H1 (cell line): ENCODE measurements at regions of chr2 and their contacts with region 1.

Region 1: DNA sequence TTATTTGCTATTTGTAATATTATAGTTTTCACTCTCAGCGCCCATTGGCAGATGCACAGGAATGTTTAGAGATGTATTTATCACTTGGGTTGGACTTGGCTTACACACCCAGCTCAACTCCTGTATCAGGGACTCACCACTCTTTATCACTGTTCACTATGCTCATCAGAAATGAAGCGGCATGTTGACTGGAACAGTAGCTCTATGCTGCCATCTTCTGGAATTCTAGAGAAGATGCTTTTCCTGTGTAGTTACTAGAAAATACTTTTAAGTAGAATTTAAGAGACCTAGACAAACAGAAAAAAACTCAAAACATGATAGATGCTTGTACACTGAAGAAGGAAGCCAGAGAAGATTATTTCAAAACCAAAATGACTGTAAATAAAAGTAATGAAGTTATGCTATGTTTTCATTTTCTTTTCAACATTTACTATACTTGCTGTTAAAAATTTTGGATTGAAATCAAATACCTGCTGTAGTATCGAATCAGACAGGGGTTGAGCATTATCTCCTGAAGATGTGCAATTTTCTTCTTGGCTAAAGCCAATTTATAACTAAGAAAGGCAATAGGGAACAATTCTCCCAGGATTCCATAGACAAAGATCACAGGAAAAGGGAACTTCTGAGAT is 47.4 kb upstream of the NXPH2 start:
- DNase-seq: no peak
- H3K4me3 ChIP-seq: no peak overlapping the region
- H3K27ac ChIP-seq: no peak overlapping the region
- H3K4me1 ChIP-seq: no peaks in the 10 kb centered on the region
- H3K27me3 ChIP-seq: no peaks in the 10 kb centered on the region
- CTCF ChIP-seq: peak in 2 of 3 experiments; percentile 56 to 70; a peak in 3 of 4 replicates
- EP300 ChIP-seq: no peak
- POLR2A ChIP-seq: no peak
- RAD21 ChIP-seq: peak; percentile 87 to 91

Region 2: DNA sequence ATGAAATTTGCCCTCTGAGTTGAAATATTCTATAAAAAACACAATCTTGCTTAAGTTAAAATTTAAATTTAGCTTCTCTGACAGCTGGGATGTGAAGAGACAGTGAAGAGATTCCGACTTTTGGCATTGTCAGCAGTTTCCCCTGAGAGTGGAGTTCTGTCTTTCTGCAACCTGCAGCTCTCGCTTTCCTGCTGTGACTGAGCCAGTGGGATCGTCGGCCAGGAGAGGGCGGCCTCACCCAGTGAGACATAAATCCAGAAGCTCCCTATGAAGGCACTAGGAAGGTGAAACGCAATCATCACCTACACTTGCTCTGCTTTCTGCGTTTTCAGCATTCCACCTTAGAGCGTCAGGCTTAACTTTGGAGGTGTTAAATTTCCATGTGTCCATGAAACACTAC is 938.7 kb before region 1 on chr2:
- CTCF ChIA-PET with region 1: interaction called, 37 read pairs
- POLR2A ChIA-PET with region 1: no interaction called
- DNase-seq: peak; percentile 13 to 62
- H3K4me3 ChIP-seq: no peak overlapping the region
- H3K27ac ChIP-seq: no peak overlapping the region
- H3K4me1 ChIP-seq: peaks cover 0 to 3% (median 1%) of the 10 kb centered on the region in 4 experiments; a peak in 2 of 7 replicates
- H3K27me3 ChIP-seq: no peaks in the 10 kb centered on the region
- CTCF ChIP-seq: peak; percentile 60 to 79 (median 65)
- EP300 ChIP-seq: no peak
- POLR2A ChIP-seq: no peak
- RAD21 ChIP-seq: peak; percentile 75 to 76

Region 3: GRCh38 chr2:137910641-137911040 is 916.9 kb before region 1 on chr2:
- CTCF ChIA-PET with region 1: interaction called, 26 read pairs
- POLR2A ChIA-PET with region 1: no interaction called
- DNase-seq: no peak
- H3K4me3 ChIP-seq: no peak overlapping the region
- H3K27ac ChIP-seq: no peak overlapping the region
- H3K4me1 ChIP-seq: no peaks in the 10 kb centered on the region
- H3K27me3 ChIP-seq: no peaks in the 10 kb centered on the region
- CTCF ChIP-seq: peak in 2 of 3 experiments; percentile 21 to 28; a peak in 2 of 4 replicates
- EP300 ChIP-seq: no peak
- POLR2A ChIP-seq: no peak
- RAD21 ChIP-seq: peak; percentile 49 to 63

Region 4: GRCh38 chr2:138814120-138814898 is 13.2 kb before region 1 on chr2:
- CTCF ChIA-PET with region 1: interaction called, 48 read pairs
- POLR2A ChIA-PET with region 1: no interaction called
- DNase-seq: no peak
- H3K4me3 ChIP-seq: no peak overlapping the region
- H3K27ac ChIP-seq: no peak overlapping the region
- H3K4me1 ChIP-seq: peaks cover 0 to 4% (median 0%) of the 10 kb centered on the region in 4 experiments; a peak in 2 of 7 replicates
- H3K27me3 ChIP-seq: no peaks in the 10 kb centered on the region
- CTCF ChIP-seq: peak in 2 of 3 experiments; percentile 48 to 70; a peak in 3 of 4 replicates
- EP300 ChIP-seq: no peak
- POLR2A ChIP-seq: no peak
- RAD21 ChIP-seq: peak in 1 of 2 experiments; percentile 38; a peak in 2 of 4 replicates

Region 5: DNA sequence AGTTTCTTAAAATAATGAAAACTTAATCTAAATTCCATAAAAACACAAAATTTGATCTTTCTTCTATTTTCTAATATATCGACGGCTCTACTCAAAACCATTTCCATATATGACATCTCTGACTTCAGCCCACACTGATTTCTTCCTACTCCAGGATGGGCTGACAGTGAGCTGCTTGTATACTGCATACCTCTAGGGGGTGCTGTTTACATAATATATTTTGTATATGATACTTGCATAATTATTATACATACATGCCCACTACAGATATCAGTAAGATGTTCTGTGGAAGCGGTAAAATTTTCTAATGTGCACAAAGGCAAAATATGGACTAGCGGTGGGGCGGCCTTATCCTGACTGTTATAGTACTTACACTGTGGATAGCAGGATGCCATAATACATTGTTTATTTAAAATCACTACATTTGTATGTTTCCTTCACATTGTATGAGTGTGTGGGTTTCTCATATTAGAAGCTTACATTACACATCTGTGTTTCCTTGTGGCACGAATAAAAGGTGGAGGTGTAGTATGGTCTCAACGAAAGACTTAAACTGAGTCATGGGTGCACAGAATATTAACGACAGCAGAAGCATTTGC is 18.8 kb after region 1 on chr2:
- CTCF ChIA-PET with region 1: interaction called, 11 read pairs
- POLR2A ChIA-PET with region 1: no interaction called
- DNase-seq: no peak
- H3K4me3 ChIP-seq: no peak overlapping the region
- H3K27ac ChIP-seq: no peak overlapping the region
- H3K4me1 ChIP-seq: no peaks in the 10 kb centered on the region
- H3K27me3 ChIP-seq: no peaks in the 10 kb centered on the region
- CTCF ChIP-seq: peak in 2 of 3 experiments; percentile 35 to 61; a peak in 2 of 4 replicates
- EP300 ChIP-seq: no peak
- POLR2A ChIP-seq: no peak
- RAD21 ChIP-seq: peak; percentile 50 to 61